K562 (cell line): ENCODE measurements at regions of chr11 and their contacts with region 1.

Region 1: GRCh38 chr11:57456960-57457642 is 3.2 kb upstream of the RTN4RL2 start:
- DNase-seq: peak; percentile 78 to 92 (median 79)
- ATAC-seq: peak; percentile 79
- H3K4me3 ChIP-seq: no peak overlapping the region
- H3K27ac ChIP-seq: no peak overlapping the region
- H3K4me1 ChIP-seq: peaks cover 19 to 45% of the 10 kb centered on the region in 2 experiments
- H3K27me3 ChIP-seq: no peaks in the 10 kb centered on the region
- CTCF ChIP-seq: peak; percentile 95 to 98 (median 96)
- EP300 ChIP-seq: no peak
- POLR2A ChIP-seq: no peak
- RAD21 ChIP-seq: peak; percentile 93 to 96

Region 2: GRCh38 chr11:57345555-57346211 is 111.4 kb before region 1 on chr11:
- CTCF ChIA-PET with region 1: interaction called, 4 read pairs
- POLR2A ChIA-PET with region 1: no interaction called
- in situ Hi-C with region 1: no loop called
- intact Hi-C with region 1: loop called (anchors 1 kb)
- DNase-seq: peak; percentile 78 to 87 (median 84)
- ATAC-seq: peak; percentile 82
- H3K4me3 ChIP-seq: no peak overlapping the region
- H3K27ac ChIP-seq: no peak overlapping the region
- H3K4me1 ChIP-seq: peaks cover 6 to 16% of the 10 kb centered on the region in 2 experiments; a peak in 4 of 5 replicates
- H3K27me3 ChIP-seq: no peaks in the 10 kb centered on the region; a peak in 1 of 5 replicates
- CTCF ChIP-seq: peak; percentile 68 to 79 (median 70)
- EP300 ChIP-seq: no peak
- POLR2A ChIP-seq: no peak
- RAD21 ChIP-seq: peak; percentile 62

Region 3: GRCh38 chr11:57480409-57481137 is 23.5 kb after region 1 on chr11:
- CTCF ChIA-PET with region 1: interaction called, 3 read pairs
- POLR2A ChIA-PET with region 1: no interaction called
- in situ Hi-C with region 1: no loop called
- intact Hi-C with region 1: loop called (anchors 1 kb)
- DNase-seq: peak; percentile 77 to 86 (median 81)
- ATAC-seq: peak; percentile 93
- H3K4me3 ChIP-seq: no peak overlapping the region
- H3K27ac ChIP-seq: no peak overlapping the region
- H3K4me1 ChIP-seq: peaks cover 6 to 27% of the 10 kb centered on the region in 2 experiments; a peak in 4 of 5 replicates
- H3K27me3 ChIP-seq: no peaks in the 10 kb centered on the region
- CTCF ChIP-seq: peak; percentile 87 to 97 (median 90)
- EP300 ChIP-seq: no peak
- POLR2A ChIP-seq: no peak
- RAD21 ChIP-seq: peak; percentile 74 to 77

Region 4: DNA sequence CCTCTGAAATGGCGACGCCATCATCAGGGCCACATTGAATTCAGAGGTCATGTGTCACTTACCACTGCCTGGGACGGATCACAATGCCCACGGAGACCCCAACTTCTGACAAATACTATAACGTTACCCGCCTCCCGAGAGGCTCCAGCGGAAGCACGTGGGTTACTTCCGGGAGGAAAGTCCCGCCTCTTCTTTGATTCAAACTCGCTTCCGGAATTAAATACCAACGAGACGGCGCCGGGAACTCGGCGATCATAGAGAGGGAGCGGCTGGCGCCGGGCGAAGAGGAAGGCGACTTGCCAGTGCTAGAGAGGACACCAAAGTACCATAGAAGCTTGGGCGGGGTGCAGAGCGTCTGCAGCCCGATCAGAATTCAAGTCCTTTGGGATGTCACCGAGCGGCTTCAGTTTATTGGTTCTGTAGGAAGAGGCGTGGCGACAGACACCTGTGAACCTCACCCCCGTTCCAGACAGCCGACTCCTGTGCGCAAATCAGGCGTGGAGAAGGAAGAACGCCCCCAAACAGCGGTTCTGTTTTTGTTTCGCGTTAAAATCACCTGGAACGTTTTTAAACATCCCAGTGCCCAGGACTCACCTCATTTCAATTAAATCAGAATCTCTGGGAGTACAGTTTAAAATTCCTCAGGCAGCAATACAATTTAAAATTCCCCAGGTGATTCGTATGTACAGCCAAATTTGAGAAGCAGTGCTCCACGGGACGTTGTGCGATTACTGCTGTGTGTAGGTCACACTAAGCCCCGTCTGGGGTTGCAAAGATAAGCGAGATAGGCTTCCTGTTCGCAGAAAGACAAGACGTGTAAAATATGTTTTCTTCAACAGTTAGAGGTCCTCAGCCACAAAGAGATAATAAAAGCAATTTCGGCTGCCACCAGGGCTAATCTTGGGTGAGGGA is 73.8 kb after region 1 on chr11 and contains the start of gene TIMM10:
- CTCF ChIA-PET with region 1: interaction called, 32 read pairs
- POLR2A ChIA-PET with region 1: interaction called, 5 read pairs
- in situ Hi-C with region 1: no loop called
- intact Hi-C with region 1: loop called (anchors 1 kb)
- DNase-seq: peak; percentile 86 to 98 (median 87)
- ATAC-seq: peak; percentile 94
- H3K4me3 ChIP-seq: peak within 1 kb of the TSS; percentile 82
- H3K27ac ChIP-seq: peak within 1 kb of the TSS; percentile 90
- H3K4me1 ChIP-seq: peaks cover 9 to 34% of the 10 kb centered on the region in 2 experiments; a peak in 4 of 5 replicates
- H3K27me3 ChIP-seq: no peaks in the 10 kb centered on the region
- CTCF ChIP-seq: peak in 2 of 3 experiments; percentile 13 to 39; a peak in 2 of 6 replicates
- EP300 ChIP-seq: peak; percentile 94
- POLR2A ChIP-seq: peak; percentile 80
- RAD21 ChIP-seq: peak; percentile 19 to 50; a peak in 3 of 4 replicates
- polyA plus RNA-seq, gene TIMM10: 493 to 553 TPM

Region 5: GRCh38 chr11:57567515-57568329 is 110.6 kb after region 1 on chr11 and contains the start of gene UBE2L6:
- CTCF ChIA-PET with region 1: interaction called, 3 read pairs
- POLR2A ChIA-PET with region 1: no interaction called
- in situ Hi-C with region 1: no loop called
- intact Hi-C with region 1: loop called (anchors 1 kb)
- DNase-seq: peak; percentile 69 to 85 (median 82)
- ATAC-seq: peak; percentile 91
- H3K4me3 ChIP-seq: peak within 1 kb of the TSS; percentile 78
- H3K27ac ChIP-seq: peak within 1 kb of the TSS; percentile 60; the same call in 2 of the 3 replicates
- H3K4me1 ChIP-seq: peaks cover 12 to 19% of the 10 kb centered on the region in 2 experiments; a peak in 4 of 5 replicates
- H3K27me3 ChIP-seq: no peaks in the 10 kb centered on the region
- CTCF ChIP-seq: peak in 2 of 3 experiments; percentile 45 to 59; a peak in 4 of 6 replicates
- EP300 ChIP-seq: no peak
- POLR2A ChIP-seq: no peak
- RAD21 ChIP-seq: peak in 1 of 2 experiments; percentile 81; a peak in 2 of 4 replicates
- polyA plus RNA-seq, gene UBE2L6: 21.5 to 24.9 TPM

Region 6: DNA sequence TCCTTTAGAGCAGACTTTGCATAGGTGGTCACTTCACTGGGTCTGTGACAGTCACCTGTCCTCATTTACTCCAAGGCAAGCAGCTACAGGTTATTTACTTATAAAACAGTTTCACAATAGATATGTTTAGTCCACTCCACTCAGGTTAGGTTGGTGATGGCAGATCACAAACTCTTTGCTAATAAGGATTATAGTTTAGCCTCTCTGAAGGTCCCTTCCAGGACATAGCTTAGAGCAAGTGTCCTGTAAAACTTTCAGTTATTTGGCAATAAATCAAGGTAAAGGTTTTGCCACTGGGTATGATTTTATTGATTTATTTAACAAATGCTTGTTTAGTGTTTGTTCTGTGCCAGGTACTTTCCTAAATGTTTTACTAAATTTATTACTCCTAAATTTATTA is 582.5 kb after region 1 on chr11:
- CTCF ChIA-PET with region 1: no interaction called
- POLR2A ChIA-PET with region 1: no interaction called
- in situ Hi-C with region 1: no loop called
- intact Hi-C with region 1: no loop called
- DNase-seq: no peak
- ATAC-seq: no peak
- H3K4me3 ChIP-seq: no peak overlapping the region
- H3K27ac ChIP-seq: no peak overlapping the region
- H3K4me1 ChIP-seq: no peaks in the 10 kb centered on the region
- H3K27me3 ChIP-seq: no peaks in the 10 kb centered on the region
- CTCF ChIP-seq: no peak
- EP300 ChIP-seq: no peak
- POLR2A ChIP-seq: no peak
- RAD21 ChIP-seq: no peak

Region 7: GRCh38 chr11:58524232-58525036 is 1067.3 kb after region 1 on chr11:
- CTCF ChIA-PET with region 1: no interaction called
- POLR2A ChIA-PET with region 1: no interaction called
- in situ Hi-C with region 1: no loop called
- intact Hi-C with region 1: loop called (anchors 5 kb)
- DNase-seq: peak; percentile 67 to 84 (median 72)
- ATAC-seq: peak; percentile 99
- H3K4me3 ChIP-seq: no peak overlapping the region
- H3K27ac ChIP-seq: no peak overlapping the region
- H3K4me1 ChIP-seq: 0 out of 5 replicates have a peak, but pooled peaks cover 0 to 2% of the 10 kb centered on the region in 2 experiments
- H3K27me3 ChIP-seq: peaks cover 3 to 5% of the 10 kb centered on the region in 2 experiments; a peak in 3 of 5 replicates
- CTCF ChIP-seq: peak; percentile 77 to 85 (median 85)
- EP300 ChIP-seq: no peak
- POLR2A ChIP-seq: no peak
- RAD21 ChIP-seq: peak; percentile 21 to 66; a peak in 3 of 4 replicates